ENCODE measurements at regions of chr13 and their contacts with region 1.

Region 1: DNA sequence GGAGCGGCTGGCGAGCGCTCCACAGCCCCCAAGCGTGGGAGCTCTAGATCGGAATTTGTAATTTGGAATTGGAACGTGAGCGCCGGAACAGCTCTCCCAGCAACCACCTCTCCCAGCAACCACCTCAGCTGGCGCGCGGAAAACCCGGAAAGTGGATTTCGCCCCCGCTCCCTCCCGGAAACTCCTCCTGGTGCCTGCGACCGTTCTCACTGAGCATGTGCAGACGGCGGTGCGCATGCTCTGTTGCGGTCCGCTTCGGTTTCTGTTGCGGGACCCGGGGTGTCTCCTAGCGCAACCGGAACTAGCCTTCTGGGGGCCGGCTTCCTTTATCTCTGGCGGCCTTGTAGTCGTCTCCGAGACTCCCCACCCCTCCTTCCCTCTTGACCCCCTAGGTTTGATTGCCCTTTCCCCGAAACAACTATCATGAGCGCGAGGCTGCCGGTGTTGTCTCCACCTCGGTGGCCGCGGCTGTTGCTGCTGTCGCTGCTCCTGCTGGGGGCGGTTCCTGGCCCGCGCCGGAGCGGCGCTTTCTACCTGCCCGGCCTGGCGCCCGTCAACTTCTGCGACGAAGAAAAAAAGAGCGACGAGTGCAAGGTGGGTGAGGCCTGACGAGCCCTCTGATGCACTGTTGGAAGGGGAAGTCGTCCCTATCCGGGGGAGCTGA is at the start of gene TM9SF2:
- DNase-seq: peak; percentile 96 to 99 (median 98)
- ATAC-seq: peak; percentile 87 to 93 (median 91)
- H3K4me3 ChIP-seq: peak within 1 kb of the TSS; percentile 59 to 91 (median 86)
- H3K27ac ChIP-seq: peak within 1 kb of the TSS; percentile 13 to 93 (median 86)
- H3K4me1 ChIP-seq: peaks cover 2 to 83% (median 56%) of the 10 kb centered on the region in 12 donors
- H3K27me3 ChIP-seq: no peaks in the 10 kb centered on the region
- CTCF ChIP-seq: peak in 1 of 12 donors; percentile 11
- POLR2A ChIP-seq: peak in 1 of 2 donors; percentile 66
- total RNA-seq, gene TM9SF2: 54.2 to 83.4 (median 68.2) TPM

Region 2: DNA sequence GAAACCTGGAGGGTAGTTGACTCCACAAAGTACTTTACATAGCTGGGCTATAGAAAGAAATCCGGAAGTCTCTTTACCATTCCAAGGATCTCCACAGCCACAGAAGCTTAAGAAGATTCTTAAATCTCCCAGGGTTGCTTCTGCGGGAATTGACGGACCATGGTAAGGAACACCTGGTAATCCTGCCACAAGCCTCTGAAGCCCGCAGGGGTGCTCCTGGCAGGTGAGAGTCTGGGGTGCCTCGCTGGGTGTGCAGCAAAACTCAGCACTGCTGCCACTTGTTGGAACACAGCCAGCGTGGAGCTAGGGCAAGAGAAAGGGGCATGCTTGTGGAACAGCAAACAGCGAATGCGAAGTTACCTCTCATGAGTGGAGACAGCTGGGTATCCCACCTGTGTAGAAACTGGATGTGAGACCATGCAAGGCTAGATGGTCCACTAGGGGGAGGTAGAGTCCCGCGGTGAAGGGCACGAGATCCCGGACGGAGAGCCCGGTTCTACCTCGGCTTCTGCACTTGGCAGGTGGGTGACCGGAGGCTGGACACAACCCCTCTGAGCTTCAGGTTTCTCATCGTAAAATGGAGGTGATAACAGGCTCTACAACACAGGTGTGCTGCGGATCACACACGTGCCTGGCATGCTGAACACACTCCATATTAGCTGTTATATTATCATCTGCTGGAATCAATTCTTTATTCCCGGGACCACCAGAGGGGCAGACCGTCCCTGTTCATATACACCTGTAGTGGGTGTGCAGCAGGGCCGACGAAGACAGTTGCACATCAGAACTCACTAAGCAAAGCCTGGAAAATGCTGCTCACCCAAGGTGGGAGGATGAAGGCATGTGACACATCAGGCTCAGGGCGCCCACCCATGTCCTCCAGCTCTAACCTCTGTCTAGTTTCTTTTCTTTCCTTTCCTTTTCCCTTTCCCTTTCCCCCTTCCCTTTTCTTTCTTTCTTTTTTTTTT is 324.7 kb before region 1 on chr13:
- intact Hi-C with region 1: loop called in 1 of 10 experiments (anchors 10 kb)
- DNase-seq: peak; percentile 66 to 81 (median 70)
- ATAC-seq: peak; percentile 63 to 93 (median 90)
- H3K4me3 ChIP-seq: no peak overlapping the region
- H3K27ac ChIP-seq: no peak overlapping the region
- H3K4me1 ChIP-seq: peaks cover 0 to 21% (median 0%) of the 10 kb centered on the region in 12 donors
- H3K27me3 ChIP-seq: peaks cover 0 to 43% (median 5%) of the 10 kb centered on the region in 9 donors
- CTCF ChIP-seq: peak; percentile 90 to 97 (median 93)
- POLR2A ChIP-seq: no peak

Region 3: GRCh38 chr13:99200432-99201167 is 300.7 kb before region 1 on chr13 and contains the start of gene UBAC2:
- intact Hi-C with region 1: loop called in 1 of 10 experiments (anchors 10 kb)
- DNase-seq: peak; percentile 95 to 99 (median 97)
- ATAC-seq: peak; percentile 86 to 98 (median 94)
- H3K4me3 ChIP-seq: peak within 1 kb of the TSS; percentile 80 to 100 (median 92)
- H3K27ac ChIP-seq: peak within 1 kb of the TSS; percentile 88 to 98 (median 96)
- H3K4me1 ChIP-seq: peaks cover 0 to 48% (median 31%) of the 10 kb centered on the region in 12 donors
- H3K27me3 ChIP-seq: no peaks in the 10 kb centered on the region
- CTCF ChIP-seq: peak in 2 of 12 donors; percentile 15 to 23
- POLR2A ChIP-seq: peak; percentile 55 to 92
- total RNA-seq, gene UBAC2: 32.6 to 55.5 (median 48.5) TPM

Region 4: GRCh38 chr13:99442273-99442895 is 58.9 kb before region 1 on chr13:
- intact Hi-C with region 1: loop called (anchors 5 to 10 kb)
- DNase-seq: no peak
- ATAC-seq: peak in 2 of 4 donors; percentile 53 to 59
- H3K4me3 ChIP-seq: no peak overlapping the region
- H3K27ac ChIP-seq: no peak overlapping the region
- H3K4me1 ChIP-seq: peaks cover 0 to 7% (median 0%) of the 10 kb centered on the region in 12 donors
- H3K27me3 ChIP-seq: peaks cover 0 to 36% (median 11%) of the 10 kb centered on the region in 9 donors
- CTCF ChIP-seq: peak; percentile 93 to 99 (median 96)
- POLR2A ChIP-seq: no peak

Region 5: DNA sequence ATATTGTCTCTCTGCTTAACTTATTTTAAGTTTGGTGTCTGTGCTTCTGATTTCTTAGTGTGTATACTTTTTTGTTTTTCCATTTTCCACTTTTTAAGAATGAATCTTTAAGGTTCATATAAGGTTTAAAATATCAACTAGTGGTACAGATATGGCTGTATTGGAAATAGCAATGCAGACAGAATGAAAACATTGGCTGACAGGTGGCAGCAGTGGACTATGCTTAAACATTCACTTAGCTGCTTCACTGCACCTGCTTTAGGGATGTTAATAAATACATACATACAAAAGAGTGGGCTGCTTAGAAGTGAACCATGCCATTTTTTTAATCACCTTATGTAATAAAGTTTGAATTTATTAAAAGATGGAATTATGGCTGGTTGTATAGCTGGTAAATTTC is 27.2 kb after region 1 on chr13:
- intact Hi-C with region 1: no loop called
- DNase-seq: no peak
- ATAC-seq: no peak
- H3K4me3 ChIP-seq: no peak overlapping the region
- H3K27ac ChIP-seq: no peak overlapping the region
- H3K4me1 ChIP-seq: peaks cover 0 to 8% (median 0%) of the 10 kb centered on the region in 12 donors
- H3K27me3 ChIP-seq: no peaks in the 10 kb centered on the region
- CTCF ChIP-seq: peak in 7 of 12 donors; percentile 9 to 35 (median 13)
- POLR2A ChIP-seq: no peak

Region 6: DNA sequence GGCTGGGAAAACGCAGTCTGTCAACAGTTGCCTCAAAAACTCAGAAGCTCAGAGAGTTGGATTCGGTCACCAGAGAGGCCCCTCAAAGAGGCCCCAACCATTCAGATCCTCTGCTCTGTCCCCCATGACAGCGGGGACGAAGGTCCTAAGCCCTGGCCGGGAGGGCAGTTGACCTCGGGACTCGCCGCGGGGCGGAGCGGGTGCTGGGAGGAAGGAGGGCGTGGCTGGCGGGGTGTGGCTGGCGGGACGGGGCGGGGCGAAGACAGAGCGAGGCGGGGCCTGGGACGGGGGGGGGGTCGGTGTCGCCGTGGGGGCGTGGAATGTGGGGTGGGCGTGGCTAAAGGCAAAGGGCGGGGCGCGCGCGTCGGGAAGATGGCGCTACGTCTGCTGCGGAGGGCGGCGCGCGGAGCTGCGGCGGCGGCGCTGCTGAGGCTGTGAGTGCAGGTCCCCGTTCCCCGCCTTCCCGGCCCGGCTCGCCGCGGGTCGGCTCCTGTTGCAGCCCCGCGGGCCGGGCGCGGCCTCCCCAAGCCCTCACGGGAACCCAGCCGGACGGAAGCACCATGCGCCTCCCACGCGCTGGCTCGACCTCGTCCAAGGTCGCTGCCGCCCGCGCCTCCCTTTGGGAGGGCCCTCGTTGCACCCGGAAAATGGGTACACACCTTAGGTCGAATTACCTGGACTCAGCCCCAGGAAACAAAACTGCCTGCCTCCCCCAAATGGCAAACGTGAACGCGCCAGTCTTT is 105.2 kb after region 1 on chr13:
- intact Hi-C with region 1: loop called in 4 of 10 experiments (anchors 2 to 10 kb)
- DNase-seq: peak; percentile 91 to 97 (median 93)
- ATAC-seq: peak; percentile 94 to 98 (median 98)
- H3K4me3 ChIP-seq: peak within 1 kb of the TSS; percentile 43 to 90 (median 71)
- H3K27ac ChIP-seq: peak within 1 kb of the TSS in 11 of 12 donors; percentile 76 to 91 (median 85)
- H3K4me1 ChIP-seq: peaks cover 0 to 18% (median 9%) of the 10 kb centered on the region in 12 donors
- H3K27me3 ChIP-seq: no peaks in the 10 kb centered on the region
- CTCF ChIP-seq: peak in 1 of 12 donors; percentile 11
- POLR2A ChIP-seq: peak; percentile 35 to 91

Region 7: DNA sequence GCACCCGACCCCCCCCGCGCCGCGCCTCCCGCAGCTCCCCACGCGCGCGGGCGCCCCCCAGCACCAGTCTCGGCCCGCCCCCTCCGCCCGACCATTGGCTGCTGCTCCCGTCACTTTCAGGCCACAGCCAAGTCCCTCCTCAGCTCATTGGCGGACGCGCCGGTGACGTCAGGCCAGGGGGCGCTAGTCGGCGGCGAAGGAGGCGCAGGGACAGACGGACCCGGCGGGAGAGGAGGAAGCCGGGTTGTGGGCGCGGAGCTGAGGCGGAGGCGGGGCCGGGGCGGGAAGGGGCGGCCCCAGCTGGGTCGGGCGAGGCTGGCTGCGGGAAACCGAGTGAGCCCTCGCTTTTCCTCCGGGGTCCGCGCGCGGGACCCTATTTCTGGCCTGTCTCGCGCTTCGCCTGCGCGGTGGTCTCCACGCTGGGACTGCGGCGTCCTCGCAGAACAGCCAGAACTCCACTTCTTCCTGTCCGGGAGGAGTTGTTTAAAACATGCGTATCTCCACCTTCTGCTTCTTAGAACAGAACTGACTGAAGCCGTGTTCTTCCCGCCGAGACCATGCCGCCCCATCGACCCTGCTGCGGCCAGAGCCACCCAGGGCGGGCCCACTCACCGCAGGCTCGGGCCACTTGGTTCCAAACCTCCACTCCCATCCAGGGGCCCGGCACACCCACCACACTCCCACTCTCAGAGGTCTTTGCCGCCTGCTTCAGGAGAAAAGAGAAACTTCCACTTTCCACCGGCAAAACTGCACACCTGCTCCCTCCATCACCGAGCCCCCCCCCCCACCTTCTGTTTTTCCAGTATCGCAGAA is 1173.7 kb after region 1 on chr13:
- intact Hi-C with region 1: loop called in 1 of 10 experiments (anchors 10 kb)
- DNase-seq: peak; percentile 99 to 100 (median 100)
- ATAC-seq: peak; percentile 98 to 99 (median 98)
- H3K4me3 ChIP-seq: peak overlapping the region; percentile 43 to 96 (median 78)
- H3K27ac ChIP-seq: peak overlapping the region; percentile 65 to 92 (median 86)
- H3K4me1 ChIP-seq: peaks cover 0 to 20% (median 12%) of the 10 kb centered on the region in 12 donors
- H3K27me3 ChIP-seq: no peaks in the 10 kb centered on the region
- CTCF ChIP-seq: peak in 10 of 12 donors; percentile 31 to 61 (median 42)
- POLR2A ChIP-seq: peak in 1 of 2 donors; percentile 85